Cardiac septum (tissue), 1 donor: ENCODE measurements at regions of chr2 and their contacts with region 1.

Region 1: GRCh38 chr2:46564811-46565241 is 85.5 kb downstream of the TMEM247 start:
- DNase-seq: no peak

Region 2: DNA sequence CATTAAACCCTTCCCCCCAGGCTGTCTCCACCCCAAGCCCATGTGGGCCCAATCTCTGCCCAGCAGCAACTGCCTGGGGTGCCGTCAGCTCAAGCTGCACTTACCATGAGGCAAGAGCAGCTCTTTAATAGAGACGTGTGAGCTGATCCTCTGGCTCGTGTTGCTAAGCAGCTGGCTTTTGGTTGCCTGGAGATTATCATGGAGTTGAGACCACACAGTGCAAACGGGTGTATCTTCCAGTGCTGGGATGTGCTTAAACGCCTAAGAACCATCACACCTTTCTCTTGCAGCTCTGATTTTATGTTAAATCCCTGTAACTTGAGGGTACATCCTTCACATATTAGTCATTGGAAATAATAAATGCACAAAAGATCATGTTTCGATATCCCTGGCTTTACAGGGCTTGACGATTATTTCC is 642.2 kb before region 1 on chr2:
- intact Hi-C with region 1: no loop called
- DNase-seq: peak; percentile 82

Region 3: DNA sequence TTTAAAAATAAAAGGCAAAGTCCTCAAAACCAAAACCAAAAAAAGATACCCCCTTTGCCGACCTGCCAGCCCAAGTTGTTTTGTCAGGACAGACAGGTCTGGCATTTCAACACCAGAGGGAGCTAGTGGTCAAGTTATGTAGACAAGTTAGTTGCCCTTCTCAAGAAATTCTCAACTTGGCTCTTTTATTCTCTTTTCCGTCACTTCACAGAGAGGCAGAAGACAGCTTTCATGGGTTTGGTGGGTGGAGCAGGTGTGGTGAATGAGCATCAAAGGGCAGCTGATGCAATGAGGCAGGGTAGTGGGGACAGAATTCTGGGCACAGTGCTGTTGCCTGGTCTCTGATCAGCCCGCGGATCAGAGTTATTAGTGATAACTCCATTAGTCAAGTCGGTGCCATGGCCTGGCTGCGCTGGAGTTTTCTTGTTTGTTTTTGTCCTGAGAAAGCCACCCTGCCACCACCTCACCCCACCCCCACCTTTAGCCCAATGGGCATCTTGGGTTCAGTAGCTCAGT is 571.3 kb before region 1 on chr2:
- intact Hi-C with region 1: no loop called
- DNase-seq: peak; percentile 57

Region 4: DNA sequence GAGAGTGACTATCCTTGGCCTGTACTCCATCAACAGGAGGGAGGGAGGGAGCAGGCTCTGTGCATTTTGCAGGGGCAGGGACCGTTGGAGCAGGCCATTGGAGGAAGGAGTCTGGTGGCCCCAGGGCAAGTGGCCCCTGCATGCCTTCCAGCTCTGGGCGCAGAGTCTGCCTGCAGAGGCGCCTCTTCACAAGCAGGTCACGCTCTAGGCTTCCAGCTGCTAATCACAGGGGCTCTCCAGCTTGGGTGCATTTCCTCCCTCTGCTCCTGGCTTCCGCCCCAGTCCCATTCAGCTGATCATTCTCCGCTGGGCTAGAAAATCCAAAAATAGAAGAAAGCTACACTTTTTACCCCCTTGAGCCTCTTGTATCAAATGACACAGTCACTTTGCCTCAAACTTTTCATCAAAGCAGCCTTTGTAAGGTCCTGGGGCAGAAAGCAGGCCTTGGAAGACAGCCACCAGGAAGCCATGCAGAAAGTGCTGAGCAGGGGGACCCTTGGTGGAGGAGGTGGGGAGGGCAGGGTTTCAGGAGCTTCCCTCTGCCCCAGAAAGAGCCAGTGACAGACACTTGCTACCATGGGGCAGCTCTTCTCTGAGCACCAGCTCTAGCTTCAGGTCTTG is 74.2 kb before region 1 on chr2:
- intact Hi-C with region 1: loop called (anchors 2 kb)
- DNase-seq: peak; percentile 87

Region 5: DNA sequence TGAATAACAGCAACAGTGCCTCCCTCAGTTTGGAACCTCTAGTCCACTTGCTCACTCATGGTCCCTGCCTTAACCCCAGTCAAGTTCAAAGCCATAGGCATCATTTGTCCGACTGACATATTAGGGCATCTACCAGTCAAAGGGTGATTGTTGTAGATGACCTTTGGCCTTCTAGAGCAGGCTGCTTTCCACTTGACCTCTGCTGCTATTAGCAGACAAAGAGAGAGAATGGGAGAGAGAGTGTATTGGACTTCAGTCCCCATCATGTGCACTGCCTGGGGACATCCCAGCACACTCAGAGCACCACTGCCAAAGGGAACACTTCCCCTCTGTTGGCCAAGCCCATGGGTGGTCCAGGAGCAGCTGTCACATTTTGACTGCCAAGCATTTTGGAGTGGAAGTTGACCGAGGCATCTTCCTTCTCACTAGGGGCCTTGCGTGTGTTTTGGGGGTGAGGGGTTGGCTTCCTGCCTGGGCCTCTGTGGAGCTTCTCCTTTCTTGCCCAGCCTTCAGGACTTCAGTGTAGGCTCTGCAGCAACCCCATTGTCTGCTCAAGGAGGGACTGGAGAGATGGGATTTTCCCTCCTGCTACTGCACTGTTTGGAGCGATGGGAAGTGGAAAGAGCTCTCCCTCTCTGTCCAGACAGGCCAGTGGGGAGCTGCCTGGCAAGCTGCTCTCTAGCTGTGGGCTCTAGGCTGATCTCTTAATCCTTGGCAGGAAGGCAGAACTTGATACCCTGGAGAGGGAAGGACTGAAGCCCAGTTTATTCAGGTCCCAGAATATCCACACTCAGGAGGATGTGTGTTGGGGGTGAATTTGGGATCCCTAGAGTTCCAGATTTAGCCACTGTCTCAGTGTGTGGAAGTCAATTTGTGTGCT is 17.4 kb before region 1 on chr2:
- intact Hi-C with region 1: loop called (anchors 2 kb)
- DNase-seq: no peak